ENCODE measurements at regions of chr15 and their contacts with region 1.

Region 1: DNA sequence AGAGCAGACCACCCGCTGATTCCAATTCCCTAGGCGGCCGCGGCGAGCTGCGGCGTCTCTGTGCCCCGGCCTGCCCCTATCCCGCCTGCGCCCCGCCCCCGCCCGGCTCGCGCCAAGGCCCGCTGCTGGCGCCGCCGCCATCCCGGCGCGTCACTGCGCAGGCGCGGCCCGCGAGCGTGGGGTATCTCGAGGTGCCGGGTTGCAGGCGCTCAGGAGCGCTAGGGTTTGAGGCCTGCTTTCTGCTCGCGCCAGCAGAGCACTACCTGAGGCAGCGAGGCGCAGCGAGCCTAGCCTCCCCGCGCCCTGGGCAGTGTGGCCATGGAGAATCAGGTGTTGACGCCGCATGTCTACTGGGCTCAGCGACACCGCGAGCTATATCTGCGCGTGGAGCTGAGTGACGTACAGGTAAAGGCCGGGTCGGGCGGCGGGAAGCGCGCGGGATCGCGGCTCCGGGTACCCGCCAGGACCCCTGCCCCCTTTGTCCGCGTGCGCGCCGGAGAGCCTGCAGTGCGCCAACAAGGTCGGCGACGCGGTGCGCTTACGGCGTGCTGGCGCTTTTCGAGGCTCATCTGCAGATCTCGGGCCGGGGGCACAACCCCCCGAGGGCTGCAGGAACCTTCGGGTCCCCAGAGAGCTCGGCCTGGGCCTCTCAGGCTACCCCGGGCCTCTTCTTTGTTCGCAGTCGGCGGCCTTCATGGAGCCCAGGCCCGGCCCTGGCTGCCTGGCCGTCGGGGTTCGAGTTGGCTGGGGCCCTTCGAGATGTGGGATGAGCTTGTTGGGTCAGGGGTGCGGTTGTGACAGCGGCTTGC is at the start of gene HACD3:
- DNase-seq: peak; percentile 90
- ATAC-seq: peak; percentile 99
- H3K4me3 Mint-ChIP-seq: peak within 1 kb of the TSS; percentile 83
- H3K27ac Mint-ChIP-seq: peak within 1 kb of the TSS; percentile 89
- H3K4me1 Mint-ChIP-seq: peaks cover 31% of the 10 kb centered on the region
- H3K27me3 Mint-ChIP-seq: no peaks in the 10 kb centered on the region
- total RNA-seq, gene HACD3: 34.8 to 36.5 TPM

Region 2: GRCh38 chr15:65516997-65517865 is 13.3 kb before region 1 on chr15 and contains the start of gene DPP8:
- CTCF ChIA-PET with region 1: interaction called, 5 read pairs
- POLR2A ChIA-PET with region 1: interaction called, 21 read pairs
- DNase-seq: peak; percentile 96
- ATAC-seq: peak; percentile 94
- H3K4me3 Mint-ChIP-seq: peak within 1 kb of the TSS; percentile 91
- H3K27ac Mint-ChIP-seq: peak within 1 kb of the TSS; percentile 93
- H3K4me1 Mint-ChIP-seq: peaks cover 39% of the 10 kb centered on the region
- H3K27me3 Mint-ChIP-seq: no peaks in the 10 kb centered on the region
- total RNA-seq, gene DPP8: 44.6 to 46.7 TPM

Region 3: GRCh38 chr15:65688462-65688861 is 157.9 kb after region 1 on chr15:
- CTCF ChIA-PET with region 1: no interaction called
- POLR2A ChIA-PET with region 1: no interaction called
- DNase-seq: no peak
- ATAC-seq: no peak
- H3K4me3 Mint-ChIP-seq: no peak overlapping the region
- H3K27ac Mint-ChIP-seq: no peak overlapping the region
- H3K4me1 Mint-ChIP-seq: no peaks in the 10 kb centered on the region
- H3K27me3 Mint-ChIP-seq: no peaks in the 10 kb centered on the region

Measured in activated CD8-positive, alpha-beta T cell treated with anti-CD3 and anti-CD28 coated beads, Interleukin-2, amount 10 ng/mL, durations not matched to agents 7 days and 5 days (primary cell).